CD4-positive, alpha-beta T cell (primary cell): ENCODE measurements at regions of chr19 and their contacts with region 1.

Region 1: GRCh38 chr19:52690369-52691214 is 44.3 kb downstream of the ZNF611 start:
- DNase-seq: peak; percentile 82 to 97 (median 90)
- ATAC-seq: peak; percentile 95
- H3K4me3 ChIP-seq: peak overlapping the region; percentile 82
- H3K4me3 Mint-ChIP-seq: peak overlapping the region; percentile 90
- H3K27ac ChIP-seq: peak overlapping the region; percentile 58 to 71
- H3K27ac Mint-ChIP-seq: peak overlapping the region; percentile 89
- H3K4me1 ChIP-seq: peaks cover 21% of the 10 kb centered on the region
- H3K4me1 Mint-ChIP-seq: peaks cover 34% of the 10 kb centered on the region
- H3K27me3 ChIP-seq: no peaks in the 10 kb centered on the region
- H3K27me3 Mint-ChIP-seq: no peaks in the 10 kb centered on the region
- CTCF ChIP-seq: no peak

Region 2: DNA sequence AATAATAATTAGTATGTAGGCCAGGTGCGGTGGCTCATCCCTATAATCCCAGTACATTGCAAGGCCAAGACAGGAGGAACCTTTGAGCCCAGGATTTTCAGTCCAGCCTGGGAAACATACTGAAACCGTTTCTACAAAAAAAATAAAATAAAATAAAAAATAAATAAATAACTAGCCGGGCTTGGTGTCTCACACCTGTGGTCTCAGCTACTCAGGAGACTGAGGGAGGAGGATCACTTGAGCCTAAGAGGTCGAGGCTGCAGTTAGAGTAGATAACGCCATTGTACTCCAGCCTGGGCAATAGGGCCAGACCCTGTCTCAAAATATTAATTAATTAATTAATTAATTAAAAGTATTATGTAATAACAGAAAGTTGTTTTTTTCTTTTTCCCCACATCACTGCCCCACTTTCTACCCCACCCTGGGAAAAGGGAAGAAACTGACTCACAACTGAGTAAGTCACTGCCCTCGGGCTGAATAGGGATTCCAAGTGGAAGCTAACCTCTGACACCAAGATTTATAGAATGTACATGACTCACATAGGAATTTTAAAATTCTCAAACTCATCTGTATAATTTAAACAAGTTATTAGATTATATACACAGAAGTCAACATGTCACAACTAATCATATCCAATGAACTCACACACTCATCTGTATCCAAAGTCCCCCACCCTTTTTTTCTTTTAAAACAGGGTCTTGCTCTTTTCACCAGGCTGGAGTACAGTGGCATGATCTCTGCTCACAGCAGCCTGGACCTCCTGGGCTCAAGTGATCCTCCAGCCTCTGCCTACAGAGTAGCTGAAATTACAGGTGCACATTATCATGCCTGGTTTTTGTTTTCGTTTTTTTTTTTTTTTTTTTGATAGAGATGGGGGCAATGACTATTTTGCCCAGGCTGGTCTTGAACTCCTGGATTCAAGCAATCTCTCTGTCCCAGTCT is 31.7 kb after region 1 on chr19:
- CTCF ChIA-PET with region 1: no interaction called
- POLR2A ChIA-PET with region 1: no interaction called
- intact Hi-C with region 1: loop called in 1 of 2 experiments (anchors 1 kb)
- DNase-seq: no peak
- ATAC-seq: no peak
- H3K4me3 ChIP-seq: no peak overlapping the region
- H3K4me3 Mint-ChIP-seq: no peak overlapping the region
- H3K27ac ChIP-seq: no peak overlapping the region
- H3K27ac Mint-ChIP-seq: no peak overlapping the region
- H3K4me1 ChIP-seq: no peaks in the 10 kb centered on the region
- H3K4me1 Mint-ChIP-seq: peaks cover 10% of the 10 kb centered on the region
- H3K27me3 ChIP-seq: no peaks in the 10 kb centered on the region
- H3K27me3 Mint-ChIP-seq: no peaks in the 10 kb centered on the region
- CTCF ChIP-seq: no peak

Region 3: DNA sequence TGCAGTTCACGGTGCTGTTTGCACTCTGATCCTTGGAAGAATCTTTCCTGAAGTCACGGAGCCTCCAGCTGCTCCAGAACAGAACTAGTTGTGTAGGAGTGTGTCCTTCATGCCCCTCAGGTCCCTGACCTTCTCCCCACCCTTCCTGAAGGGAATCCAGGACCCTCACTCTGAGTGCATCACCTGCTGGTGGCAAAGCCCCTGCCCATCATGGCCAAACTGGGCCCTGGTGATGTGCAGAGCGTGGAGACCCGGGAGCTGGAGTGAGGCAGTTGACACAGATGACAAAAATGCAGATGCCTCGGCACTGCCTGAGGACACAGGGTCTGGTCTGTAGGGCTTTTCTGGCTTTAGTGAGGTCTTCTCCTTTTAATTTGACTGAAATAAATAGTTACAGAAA is 288.0 kb after region 1 on chr19:
- CTCF ChIA-PET with region 1: no interaction called
- POLR2A ChIA-PET with region 1: no interaction called
- intact Hi-C with region 1: loop called in 1 of 2 experiments (anchors 2 kb)
- DNase-seq: no peak
- ATAC-seq: no peak
- H3K4me3 ChIP-seq: no peak overlapping the region
- H3K4me3 Mint-ChIP-seq: no peak overlapping the region
- H3K27ac ChIP-seq: no peak overlapping the region
- H3K27ac Mint-ChIP-seq: no peak overlapping the region
- H3K4me1 ChIP-seq: no peaks in the 10 kb centered on the region
- H3K4me1 Mint-ChIP-seq: no peaks in the 10 kb centered on the region
- H3K27me3 ChIP-seq: no peaks in the 10 kb centered on the region
- H3K27me3 Mint-ChIP-seq: no peaks in the 10 kb centered on the region
- CTCF ChIP-seq: no peak